Naive thymus-derived CD4-positive, alpha-beta T cell (primary cell): ENCODE measurements at regions of chr11 and their contacts with region 1.

Region 1: GRCh38 chr11:48055292-48056132 is 75.2 kb downstream of the PTPRJ start:
- DNase-seq: peak in 8 of 9 donors; percentile 69 to 91 (median 88)
- ATAC-seq: peak; percentile 91
- H3K4me3 ChIP-seq: peak overlapping the region; percentile 58
- H3K4me3 Mint-ChIP-seq: peak overlapping the region; percentile 74 to 88 (median 78)
- H3K27ac ChIP-seq: peak overlapping the region; percentile 34
- H3K27ac Mint-ChIP-seq: peak overlapping the region; percentile 41 to 98 (median 92)
- H3K4me1 ChIP-seq: peaks cover 67 to 84% of the 10 kb centered on the region in 2 donors
- H3K4me1 Mint-ChIP-seq: peaks cover 70 to 91% (median 87%) of the 10 kb centered on the region in 7 donors
- H3K27me3 ChIP-seq: no peaks in the 10 kb centered on the region
- H3K27me3 Mint-ChIP-seq: peaks cover 0 to 2% (median 0%) of the 10 kb centered on the region in 5 donors

Region 2: GRCh38 chr11:47411884-47412746 is 643.4 kb before region 1 on chr11:
- CTCF ChIA-PET with region 1: no interaction called
- POLR2A ChIA-PET with region 1: no interaction called
- intact Hi-C with region 1: no loop called
- DNase-seq: peak in 7 of 9 donors; percentile 28 to 72 (median 48)
- ATAC-seq: no peak
- H3K4me3 ChIP-seq: no peak overlapping the region
- H3K4me3 Mint-ChIP-seq: no peak overlapping the region
- H3K27ac ChIP-seq: no peak overlapping the region
- H3K27ac Mint-ChIP-seq: peak overlapping the region in 2 of 9 donors; percentile 56 to 65
- H3K4me1 ChIP-seq: peaks cover 8 to 13% of the 10 kb centered on the region in 2 donors
- H3K4me1 Mint-ChIP-seq: peaks cover 4 to 23% (median 17%) of the 10 kb centered on the region in 7 donors
- H3K27me3 ChIP-seq: no peaks in the 10 kb centered on the region
- H3K27me3 Mint-ChIP-seq: no peaks in the 10 kb centered on the region

Region 3: DNA sequence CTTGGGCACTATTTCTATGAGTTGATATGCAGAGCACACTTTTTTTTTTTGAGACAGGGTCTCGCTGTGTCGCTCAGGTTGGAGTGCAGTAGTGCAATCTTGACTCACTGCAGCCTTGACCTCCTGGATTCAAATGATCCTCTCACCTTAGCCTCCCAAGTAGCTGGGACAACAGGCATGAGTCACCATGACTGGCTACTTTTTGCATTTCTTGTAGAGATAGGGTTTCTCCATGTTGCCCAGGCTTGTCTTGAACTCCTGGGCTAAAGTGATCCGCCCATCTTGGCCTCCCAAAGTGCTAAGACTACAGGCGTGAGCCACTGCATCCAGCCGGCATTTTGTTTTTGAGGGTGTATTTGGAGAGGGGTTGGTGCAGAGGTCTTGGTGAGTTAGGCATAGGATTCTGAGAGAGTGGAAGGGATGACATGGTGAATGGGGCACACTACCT is 383.2 kb before region 1 on chr11:
- CTCF ChIA-PET with region 1: no interaction called
- POLR2A ChIA-PET with region 1: no interaction called
- intact Hi-C with region 1: no loop called
- DNase-seq: no peak
- ATAC-seq: no peak
- H3K4me3 ChIP-seq: no peak overlapping the region
- H3K4me3 Mint-ChIP-seq: no peak overlapping the region
- H3K27ac ChIP-seq: no peak overlapping the region
- H3K27ac Mint-ChIP-seq: no peak overlapping the region
- H3K4me1 ChIP-seq: no peaks in the 10 kb centered on the region
- H3K4me1 Mint-ChIP-seq: peaks cover 0 to 3% (median 0%) of the 10 kb centered on the region in 7 donors
- H3K27me3 ChIP-seq: no peaks in the 10 kb centered on the region
- H3K27me3 Mint-ChIP-seq: no peaks in the 10 kb centered on the region

Region 4: GRCh38 chr11:47766305-47767227 is 288.9 kb before region 1 on chr11:
- CTCF ChIA-PET with region 1: no interaction called
- POLR2A ChIA-PET with region 1: no interaction called
- intact Hi-C with region 1: loop called in 1 of 2 experiments (anchors 2 kb)
- DNase-seq: peak; percentile 60 to 84 (median 79)
- ATAC-seq: peak; percentile 52
- H3K4me3 ChIP-seq: peak overlapping the region; percentile 94
- H3K4me3 Mint-ChIP-seq: peak overlapping the region; percentile 88 to 100 (median 96)
- H3K27ac ChIP-seq: peak overlapping the region; percentile 97
- H3K27ac Mint-ChIP-seq: peak overlapping the region; percentile 96 to 100 (median 99)
- H3K4me1 ChIP-seq: peaks cover 20 to 22% of the 10 kb centered on the region in 2 donors
- H3K4me1 Mint-ChIP-seq: peaks cover 16 to 39% (median 23%) of the 10 kb centered on the region in 7 donors
- H3K27me3 ChIP-seq: no peaks in the 10 kb centered on the region
- H3K27me3 Mint-ChIP-seq: no peaks in the 10 kb centered on the region

Region 5: GRCh38 chr11:47932544-47932943 is 123.0 kb before region 1 on chr11:
- CTCF ChIA-PET with region 1: interaction called, 13 read pairs
- POLR2A ChIA-PET with region 1: interaction called, 9 read pairs
- intact Hi-C with region 1: loop called (anchors 1 to 2 kb)
- DNase-seq: no peak
- ATAC-seq: no peak
- H3K4me3 ChIP-seq: no peak overlapping the region
- H3K4me3 Mint-ChIP-seq: no peak overlapping the region
- H3K27ac ChIP-seq: no peak overlapping the region
- H3K27ac Mint-ChIP-seq: peak overlapping the region in 1 of 9 donors; percentile 41
- H3K4me1 ChIP-seq: peaks cover 7 to 13% of the 10 kb centered on the region in 2 donors
- H3K4me1 Mint-ChIP-seq: peaks cover 0 to 28% (median 17%) of the 10 kb centered on the region in 7 donors
- H3K27me3 ChIP-seq: no peaks in the 10 kb centered on the region
- H3K27me3 Mint-ChIP-seq: peaks cover 0 to 2% (median 0%) of the 10 kb centered on the region in 5 donors

Region 6: DNA sequence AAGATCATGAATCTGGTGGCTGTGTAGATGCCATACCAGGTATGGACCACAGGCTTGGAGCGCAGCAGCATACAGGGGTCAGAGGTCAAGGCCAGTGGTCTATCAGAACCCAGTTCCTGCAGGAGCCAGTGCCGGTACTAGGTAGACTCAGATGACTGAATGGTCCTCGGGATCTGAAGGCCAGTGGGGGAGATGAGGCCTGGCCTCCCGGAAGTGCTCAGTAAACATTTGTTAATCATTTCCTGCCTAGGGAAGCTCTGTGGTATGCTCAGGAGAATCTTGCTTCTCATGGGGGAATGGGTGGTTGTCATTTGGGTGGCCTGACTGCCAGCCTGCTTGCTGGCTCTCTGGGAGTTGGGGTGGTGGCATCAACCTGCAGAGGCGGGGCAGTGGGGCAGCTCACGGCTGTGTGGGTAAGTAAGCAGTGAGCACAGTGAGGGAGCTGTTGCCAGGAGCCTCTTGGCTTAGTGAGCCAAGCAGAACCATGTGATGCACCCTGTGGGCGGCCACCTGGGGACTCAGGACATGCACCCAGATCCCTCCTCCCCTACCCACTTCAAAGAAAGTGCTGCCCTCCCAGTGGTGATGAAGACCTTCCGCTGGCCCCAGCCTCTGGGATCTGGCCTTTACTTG is 42.1 kb before region 1 on chr11:
- CTCF ChIA-PET with region 1: interaction called, 3 read pairs
- POLR2A ChIA-PET with region 1: interaction called, 27 read pairs
- intact Hi-C with region 1: loop called in 1 of 2 experiments (anchors 2 kb)
- DNase-seq: peak in 1 of 9 donors; percentile 62
- ATAC-seq: peak; percentile 46
- H3K4me3 ChIP-seq: peak overlapping the region; percentile 20
- H3K4me3 Mint-ChIP-seq: peak overlapping the region in 9 of 10 donors; percentile 37 to 79 (median 63)
- H3K27ac ChIP-seq: peak overlapping the region; percentile 34
- H3K27ac Mint-ChIP-seq: peak overlapping the region; percentile 86 to 97 (median 90)
- H3K4me1 ChIP-seq: peaks cover 70 to 88% of the 10 kb centered on the region in 2 donors
- H3K4me1 Mint-ChIP-seq: peaks cover 58 to 89% (median 84%) of the 10 kb centered on the region in 7 donors
- H3K27me3 ChIP-seq: no peaks in the 10 kb centered on the region
- H3K27me3 Mint-ChIP-seq: no peaks in the 10 kb centered on the region

Region 7: DNA sequence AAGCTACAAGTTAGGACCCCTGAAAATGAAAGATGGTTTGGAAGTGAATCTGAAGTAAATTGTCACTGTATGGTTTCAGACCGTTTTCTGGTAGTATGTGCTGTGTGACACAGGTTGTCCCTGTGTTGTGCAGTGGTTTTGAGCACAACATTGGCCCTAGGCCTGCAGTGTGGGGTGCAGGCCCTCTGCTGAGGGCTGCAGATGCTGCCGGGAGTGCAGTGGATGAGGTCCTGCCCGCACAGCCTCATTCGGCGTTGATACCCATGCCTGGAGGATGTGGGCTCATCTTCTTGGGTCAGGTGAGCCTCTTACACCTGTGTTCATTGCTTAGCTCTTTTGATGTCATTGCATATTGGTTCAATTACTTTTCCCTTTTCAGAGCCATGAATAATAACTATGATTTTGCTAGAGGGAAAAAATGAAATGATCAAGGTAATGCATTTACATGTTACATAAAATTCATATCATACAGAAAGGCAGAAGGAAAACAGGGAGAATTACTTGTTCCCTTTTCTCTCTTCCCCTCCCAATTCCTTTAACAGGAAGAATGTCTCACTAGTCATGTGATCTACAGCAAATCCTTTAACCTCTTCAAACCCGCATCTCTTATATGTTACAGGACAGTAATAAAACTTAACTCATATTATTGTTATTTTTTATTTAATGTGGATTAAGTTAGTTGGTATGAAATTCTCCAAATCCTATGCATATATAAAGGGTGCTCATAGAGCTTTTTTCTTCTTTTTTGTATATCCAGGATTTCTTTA is 26.4 kb before region 1 on chr11:
- CTCF ChIA-PET with region 1: interaction called, 4 read pairs
- POLR2A ChIA-PET with region 1: interaction called, 12 read pairs
- intact Hi-C with region 1: loop called in 1 of 2 experiments (anchors 2 kb)
- DNase-seq: peak in 6 of 9 donors; percentile 34 to 57 (median 46)
- ATAC-seq: peak; percentile 61
- H3K4me3 ChIP-seq: peak overlapping the region; percentile 3
- H3K4me3 Mint-ChIP-seq: peak overlapping the region in 9 of 10 donors; percentile 5 to 71 (median 63)
- H3K27ac ChIP-seq: peak overlapping the region; percentile 55
- H3K27ac Mint-ChIP-seq: peak overlapping the region; percentile 82 to 95 (median 90)
- H3K4me1 ChIP-seq: peaks cover 17 to 33% of the 10 kb centered on the region in 2 donors
- H3K4me1 Mint-ChIP-seq: peaks cover 40 to 80% (median 61%) of the 10 kb centered on the region in 7 donors
- H3K27me3 ChIP-seq: no peaks in the 10 kb centered on the region
- H3K27me3 Mint-ChIP-seq: no peaks in the 10 kb centered on the region

Region 8: DNA sequence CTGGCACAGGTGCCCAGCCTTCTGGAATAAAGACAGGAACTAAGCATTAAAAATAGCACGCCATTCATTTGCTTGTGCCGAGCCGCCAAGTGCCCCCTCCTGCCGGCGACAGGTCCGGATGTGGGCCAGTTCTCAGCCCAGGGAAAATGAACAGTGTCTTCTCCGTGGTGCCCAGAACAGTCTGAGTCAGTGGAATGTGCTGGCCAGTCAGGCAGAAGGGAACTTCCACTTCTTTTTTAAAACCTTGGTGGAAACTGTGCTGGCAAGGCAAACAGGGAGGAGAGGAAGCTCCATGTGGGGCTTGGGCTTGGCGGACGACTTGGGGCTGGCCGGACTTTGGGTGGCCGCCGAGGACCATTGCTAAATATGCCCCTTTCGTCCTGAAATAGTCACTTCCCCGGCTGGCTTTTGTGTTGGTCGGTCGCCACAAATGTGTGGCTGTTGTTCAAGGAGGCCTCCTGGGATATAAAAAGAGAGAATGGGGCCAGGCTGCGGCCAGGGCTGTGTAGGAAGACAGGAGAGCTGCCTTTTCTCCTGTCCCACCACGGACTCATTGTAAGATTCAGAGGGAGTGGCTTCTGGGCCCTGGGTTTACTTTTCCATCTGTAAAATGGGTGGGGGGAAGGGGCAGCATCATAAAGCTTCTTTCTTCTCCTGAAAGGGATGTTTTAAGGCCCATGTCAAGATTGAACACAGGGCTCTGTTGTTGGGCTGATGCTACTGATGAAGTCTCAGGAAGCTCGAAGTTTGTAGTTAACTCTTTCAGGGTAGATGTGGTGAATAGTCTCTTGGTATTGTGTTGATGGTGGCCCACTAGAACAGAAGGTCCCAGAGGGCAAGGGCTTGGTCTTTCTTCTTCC is 25.9 kb after region 1 on chr11:
- CTCF ChIA-PET with region 1: no interaction called
- POLR2A ChIA-PET with region 1: interaction called, 14 read pairs
- intact Hi-C with region 1: no loop called
- DNase-seq: peak in 3 of 9 donors; percentile 3 to 44 (median 14)
- ATAC-seq: peak; percentile 81
- H3K4me3 ChIP-seq: no peak overlapping the region
- H3K4me3 Mint-ChIP-seq: peak overlapping the region in 7 of 10 donors; percentile 33 to 65 (median 60)
- H3K27ac ChIP-seq: no peak overlapping the region
- H3K27ac Mint-ChIP-seq: peak overlapping the region in 8 of 9 donors; percentile 21 to 83 (median 56)
- H3K4me1 ChIP-seq: peaks cover 0 to 10% of the 10 kb centered on the region in 2 donors
- H3K4me1 Mint-ChIP-seq: peaks cover 42 to 70% (median 64%) of the 10 kb centered on the region in 7 donors
- H3K27me3 ChIP-seq: no peaks in the 10 kb centered on the region
- H3K27me3 Mint-ChIP-seq: no peaks in the 10 kb centered on the region